ENCODE measurements at regions of chr6 and their contacts with region 1.

Region 1: GRCh38 chr6:84227434-84228197 is at the start of gene CEP162:
- DNase-seq: peak; percentile 89 to 94 (median 91)
- H3K4me3 ChIP-seq: peak within 1 kb of the TSS; percentile 94 to 95
- H3K4me3 Mint-ChIP-seq: peak within 1 kb of the TSS; percentile 96 to 100 (median 98)
- H3K27ac ChIP-seq: peak within 1 kb of the TSS; percentile 69
- H3K27ac Mint-ChIP-seq: peak within 1 kb of the TSS; percentile 90 to 98 (median 96)
- H3K4me1 ChIP-seq: peaks cover 17% of the 10 kb centered on the region
- H3K4me1 Mint-ChIP-seq: peaks cover 8 to 32% (median 19%) of the 10 kb centered on the region in 4 donors
- H3K27me3 ChIP-seq: no peaks in the 10 kb centered on the region
- H3K27me3 Mint-ChIP-seq: peaks cover 5 to 6% of the 10 kb centered on the region in 2 donors
- total RNA-seq, gene CEP162: 10.3 to 10.4 TPM

Region 2: GRCh38 chr6:82247634-82248232 is 1979.9 kb before region 1 on chr6 and contains the start of gene IBTK:
- CTCF ChIA-PET with region 1: no interaction called
- POLR2A ChIA-PET with region 1: interaction called, 4 read pairs
- intact Hi-C with region 1: loop called (anchors 2 kb)
- DNase-seq: peak; percentile 91 to 96 (median 92)
- H3K4me3 ChIP-seq: peak within 1 kb of the TSS; percentile 52 to 91
- H3K4me3 Mint-ChIP-seq: peak within 1 kb of the TSS; percentile 95 to 99 (median 98)
- H3K27ac ChIP-seq: peak within 1 kb of the TSS; percentile 88
- H3K27ac Mint-ChIP-seq: peak within 1 kb of the TSS; percentile 95 to 99 (median 98)
- H3K4me1 ChIP-seq: peaks cover 42% of the 10 kb centered on the region
- H3K4me1 Mint-ChIP-seq: peaks cover 26 to 53% (median 38%) of the 10 kb centered on the region in 4 donors
- H3K27me3 ChIP-seq: no peaks in the 10 kb centered on the region
- H3K27me3 Mint-ChIP-seq: no peaks in the 10 kb centered on the region
- total RNA-seq, gene IBTK: 28.9 to 29.5 TPM

Region 3: GRCh38 chr6:83221889-83222479 is 1005.6 kb before region 1 on chr6:
- CTCF ChIA-PET with region 1: no interaction called
- POLR2A ChIA-PET with region 1: no interaction called
- intact Hi-C with region 1: loop called (anchors 10 kb)
- DNase-seq: peak in 4 of 5 donors; percentile 10 to 27 (median 19)
- H3K4me3 ChIP-seq: no peak overlapping the region
- H3K4me3 Mint-ChIP-seq: no peak overlapping the region
- H3K27ac ChIP-seq: no peak overlapping the region
- H3K27ac Mint-ChIP-seq: no peak overlapping the region
- H3K4me1 ChIP-seq: no peaks in the 10 kb centered on the region
- H3K4me1 Mint-ChIP-seq: no peaks in the 10 kb centered on the region
- H3K27me3 ChIP-seq: no peaks in the 10 kb centered on the region
- H3K27me3 Mint-ChIP-seq: peaks cover 0 to 1% of the 10 kb centered on the region in 2 donors

Region 4: DNA sequence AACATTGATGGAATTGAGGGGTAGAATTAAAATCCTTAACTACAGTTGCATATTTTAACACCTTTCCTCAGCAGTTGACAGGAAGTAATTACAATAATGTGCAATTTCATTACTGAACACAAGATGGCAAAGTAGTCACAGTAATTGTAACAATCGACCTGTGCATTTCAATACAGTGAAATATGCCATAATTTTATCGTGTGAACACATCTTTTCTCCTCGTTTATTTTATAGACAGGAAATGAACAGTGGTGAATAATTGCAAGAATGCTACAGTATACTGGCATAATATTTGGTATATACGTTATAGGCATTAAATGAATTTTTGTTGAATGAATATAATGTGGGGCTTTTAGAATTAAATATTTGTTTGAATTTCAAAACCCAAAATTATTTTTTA is 343.1 kb before region 1 on chr6:
- CTCF ChIA-PET with region 1: interaction called, 18 read pairs
- POLR2A ChIA-PET with region 1: no interaction called
- intact Hi-C with region 1: loop called (anchors 2 kb)
- DNase-seq: peak in 4 of 5 donors; percentile 28 to 48 (median 46)
- H3K4me3 ChIP-seq: no peak overlapping the region
- H3K4me3 Mint-ChIP-seq: no peak overlapping the region
- H3K27ac ChIP-seq: no peak overlapping the region
- H3K27ac Mint-ChIP-seq: peak overlapping the region in 1 of 7 donors; percentile 35
- H3K4me1 ChIP-seq: peaks cover 7% of the 10 kb centered on the region
- H3K4me1 Mint-ChIP-seq: peaks cover 12 to 26% (median 19%) of the 10 kb centered on the region in 4 donors
- H3K27me3 ChIP-seq: no peaks in the 10 kb centered on the region
- H3K27me3 Mint-ChIP-seq: no peaks in the 10 kb centered on the region

Region 5: DNA sequence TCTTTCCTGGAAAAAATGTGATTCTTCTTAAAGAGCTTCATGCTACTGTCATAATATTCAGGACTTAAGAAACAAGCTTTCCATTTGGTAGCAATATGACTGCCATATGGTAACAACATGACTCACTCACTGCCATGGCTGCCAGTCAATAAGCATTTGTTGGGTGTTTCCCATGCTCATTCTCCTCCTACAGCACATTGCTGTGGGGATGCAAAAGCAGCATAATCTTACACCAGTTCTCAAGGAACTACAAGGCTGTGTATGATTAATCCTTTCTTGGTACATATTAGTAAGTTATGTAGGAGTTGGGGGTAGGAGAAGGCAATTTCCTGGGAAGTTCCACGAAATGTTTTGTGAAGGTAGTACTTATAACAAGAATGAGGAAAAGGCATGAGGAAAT is 76.9 kb before region 1 on chr6:
- CTCF ChIA-PET with region 1: no interaction called
- POLR2A ChIA-PET with region 1: no interaction called
- intact Hi-C with region 1: no loop called
- DNase-seq: no peak
- H3K4me3 ChIP-seq: no peak overlapping the region
- H3K4me3 Mint-ChIP-seq: no peak overlapping the region
- H3K27ac ChIP-seq: no peak overlapping the region
- H3K27ac Mint-ChIP-seq: no peak overlapping the region
- H3K4me1 ChIP-seq: no peaks in the 10 kb centered on the region
- H3K4me1 Mint-ChIP-seq: peaks cover 0 to 2% (median under 1%) of the 10 kb centered on the region in 4 donors
- H3K27me3 ChIP-seq: no peaks in the 10 kb centered on the region
- H3K27me3 Mint-ChIP-seq: no peaks in the 10 kb centered on the region

Region 6: DNA sequence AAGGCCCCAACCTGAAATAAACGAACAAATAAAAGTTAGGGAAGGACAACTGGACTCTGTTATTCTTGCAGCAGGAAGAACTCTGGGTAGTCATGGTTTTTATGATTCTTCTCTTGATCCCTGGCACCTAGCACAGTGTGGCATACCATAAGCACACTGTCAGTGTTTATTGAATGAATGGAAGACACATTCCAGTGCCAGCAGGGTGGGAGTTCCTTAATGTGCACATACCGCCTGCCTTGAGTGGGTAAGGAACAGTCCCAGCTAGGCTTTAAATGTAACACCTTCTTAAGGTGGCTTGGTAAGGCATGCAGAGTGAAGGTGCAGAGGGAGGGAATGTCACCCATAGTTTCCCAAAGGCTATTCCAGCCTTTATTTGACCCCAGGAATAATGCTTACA is 162.7 kb after region 1 on chr6:
- CTCF ChIA-PET with region 1: no interaction called
- POLR2A ChIA-PET with region 1: no interaction called
- intact Hi-C with region 1: no loop called
- DNase-seq: no peak
- H3K4me3 ChIP-seq: no peak overlapping the region
- H3K4me3 Mint-ChIP-seq: no peak overlapping the region
- H3K27ac ChIP-seq: no peak overlapping the region
- H3K27ac Mint-ChIP-seq: no peak overlapping the region
- H3K4me1 ChIP-seq: no peaks in the 10 kb centered on the region
- H3K4me1 Mint-ChIP-seq: no peaks in the 10 kb centered on the region
- H3K27me3 ChIP-seq: no peaks in the 10 kb centered on the region
- H3K27me3 Mint-ChIP-seq: no peaks in the 10 kb centered on the region

Region 7: DNA sequence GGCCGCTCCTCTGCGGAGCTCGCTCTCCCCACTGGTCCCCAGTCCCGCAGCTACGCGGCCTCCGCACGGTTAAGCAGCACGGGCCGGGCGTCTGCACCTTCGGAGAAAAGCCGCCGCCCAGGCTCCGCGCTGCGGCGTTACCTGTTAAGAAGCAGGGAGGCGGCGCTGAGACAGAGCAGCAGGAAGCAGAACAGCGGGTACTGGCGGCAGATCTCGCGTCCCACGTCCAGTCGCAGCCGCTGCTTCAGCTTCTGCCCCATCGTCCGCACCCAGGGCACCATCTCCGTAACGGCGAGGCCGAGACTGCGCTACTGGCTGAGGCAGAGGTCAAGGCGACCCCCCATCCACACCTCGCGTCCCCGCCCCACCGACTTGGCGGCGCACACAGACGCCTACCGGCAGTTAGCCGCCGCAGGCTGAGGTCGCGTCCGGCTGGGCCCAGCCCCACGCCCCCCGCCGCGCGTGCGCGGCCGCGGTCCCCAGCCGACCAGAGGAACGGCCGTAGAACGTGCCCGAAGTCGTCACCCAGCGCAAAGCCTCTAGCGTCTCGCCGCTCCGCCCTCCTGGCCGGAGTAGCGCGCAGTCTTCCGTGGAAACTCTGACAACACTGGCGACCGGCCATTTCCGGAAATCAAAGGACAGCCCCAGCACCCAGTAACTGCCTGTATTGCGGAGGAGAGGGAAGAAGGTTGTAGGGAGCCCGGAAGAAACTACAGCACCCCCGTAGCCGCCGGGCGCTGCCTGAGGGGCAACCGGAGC is 1366.0 kb after region 1 on chr6 and contains the start of gene SNX14:
- CTCF ChIA-PET with region 1: no interaction called
- POLR2A ChIA-PET with region 1: no interaction called
- intact Hi-C with region 1: loop called (anchors 5 kb)
- DNase-seq: peak; percentile 74 to 87 (median 78)
- H3K4me3 ChIP-seq: peak within 1 kb of the TSS; percentile 59 to 86
- H3K4me3 Mint-ChIP-seq: peak within 1 kb of the TSS; percentile 92 to 98 (median 96)
- H3K27ac ChIP-seq: peak within 1 kb of the TSS; percentile 83
- H3K27ac Mint-ChIP-seq: peak within 1 kb of the TSS; percentile 96 to 99 (median 98)
- H3K4me1 ChIP-seq: peaks cover 33% of the 10 kb centered on the region
- H3K4me1 Mint-ChIP-seq: peaks cover 29 to 56% (median 43%) of the 10 kb centered on the region in 4 donors
- H3K27me3 ChIP-seq: no peaks in the 10 kb centered on the region
- H3K27me3 Mint-ChIP-seq: no peaks in the 10 kb centered on the region
- total RNA-seq, gene SNX14: 63.0 to 70.3 TPM